IMR-90 (cell line): ENCODE measurements at regions of chr5 and their contacts with region 1.

Region 1: DNA sequence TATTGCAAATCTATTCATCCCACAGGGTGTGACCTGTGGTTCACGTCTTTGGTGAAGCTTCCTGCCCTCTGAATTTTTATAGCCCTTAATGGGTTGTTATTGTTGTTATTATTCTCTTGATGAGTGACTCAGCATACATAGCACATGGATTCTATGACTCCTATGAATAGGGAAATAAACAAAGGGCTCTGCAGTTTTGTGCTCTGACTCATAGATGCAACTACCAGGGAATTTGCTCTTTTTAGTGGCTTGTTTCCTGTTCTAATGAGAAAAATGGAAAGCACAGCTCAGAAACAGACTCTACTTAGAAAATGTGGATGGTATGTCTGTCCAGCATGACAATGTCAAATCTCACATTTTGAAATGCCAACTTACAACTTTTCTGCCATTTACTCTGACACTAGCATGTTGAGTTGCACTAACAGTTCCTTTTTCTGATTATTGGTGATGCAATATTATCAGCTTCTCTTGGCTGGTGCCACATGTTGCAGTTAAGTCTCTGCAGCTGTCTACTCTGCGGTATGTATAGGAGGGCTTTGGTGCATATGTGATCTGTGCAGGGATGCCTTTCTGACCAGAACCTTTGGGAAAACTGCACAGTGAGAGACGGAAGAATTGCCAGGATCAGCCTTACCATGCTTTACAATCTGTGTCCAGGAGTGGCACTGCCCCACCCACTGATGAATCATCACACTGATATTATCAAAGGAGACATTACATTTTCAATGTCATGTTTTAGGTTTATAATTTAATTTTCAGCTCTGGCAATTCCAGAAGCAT is 996.4 kb upstream of the WWC1 start:
- DNase-seq: peak; percentile 91
- ATAC-seq: peak; percentile 92
- H3K4me3 ChIP-seq: no peak overlapping the region
- H3K27ac ChIP-seq: peak overlapping the region; percentile 81
- H3K4me1 ChIP-seq: peaks cover 16% of the 10 kb centered on the region
- H3K27me3 ChIP-seq: no peaks in the 10 kb centered on the region
- CTCF ChIP-seq: no peak
- POLR2A ChIP-seq: no peak
- RAD21 ChIP-seq: no peak

Region 2: DNA sequence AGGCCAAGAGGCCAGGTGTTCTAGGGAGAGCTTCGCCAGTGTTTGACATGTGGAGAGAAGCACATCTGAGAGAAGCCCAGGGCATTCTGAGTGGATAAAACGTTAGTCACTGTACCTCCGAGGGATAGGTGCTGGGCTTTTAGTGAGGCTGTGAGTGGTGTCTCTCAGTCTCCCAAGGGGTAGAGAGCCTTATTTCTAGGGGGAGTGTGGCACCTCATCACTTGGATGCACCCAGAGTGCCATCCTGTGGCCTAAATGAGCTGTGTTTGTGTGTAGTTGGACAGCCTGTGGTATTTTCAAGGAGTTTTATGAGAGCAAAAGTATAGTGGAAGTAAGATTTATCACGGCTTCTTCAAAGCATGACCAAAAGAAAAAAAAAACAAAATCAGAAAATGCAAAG is 50.5 kb before region 1 on chr5:
- CTCF ChIA-PET with region 1: no interaction called
- POLR2A ChIA-PET with region 1: no interaction called
- dilution Hi-C with region 1: no loop called
- in situ Hi-C with region 1: no loop called
- intact Hi-C with region 1: loop called (anchors 5 kb)
- DNase-seq: no peak
- ATAC-seq: no peak
- H3K4me3 ChIP-seq: no peak overlapping the region
- H3K27ac ChIP-seq: no peak overlapping the region
- H3K4me1 ChIP-seq: no peaks in the 10 kb centered on the region
- H3K27me3 ChIP-seq: no peaks in the 10 kb centered on the region
- CTCF ChIP-seq: peak; percentile 28
- POLR2A ChIP-seq: no peak
- RAD21 ChIP-seq: no peak